H1 (cell line): ENCODE measurements at regions of chr5 and their contacts with region 1.

Region 1: GRCh38 chr5:78008356-78008967 is 232.3 kb upstream of the TBCA start:
- DNase-seq: no peak
- H3K4me3 ChIP-seq: no peak overlapping the region
- H3K27ac ChIP-seq: no peak overlapping the region
- H3K4me1 ChIP-seq: peaks cover 0 to 3% (median 0%) of the 10 kb centered on the region in 4 experiments; a peak in 1 of 7 replicates
- H3K27me3 ChIP-seq: peaks cover 0 to 1% (median under 1%) of the 10 kb centered on the region in 4 experiments; a peak in 2 of 7 replicates
- CTCF ChIP-seq: peak in 2 of 3 experiments; percentile 73 to 77; a peak in 3 of 4 replicates
- EP300 ChIP-seq: no peak
- POLR2A ChIP-seq: no peak
- RAD21 ChIP-seq: peak; percentile 86 to 91

Region 2: DNA sequence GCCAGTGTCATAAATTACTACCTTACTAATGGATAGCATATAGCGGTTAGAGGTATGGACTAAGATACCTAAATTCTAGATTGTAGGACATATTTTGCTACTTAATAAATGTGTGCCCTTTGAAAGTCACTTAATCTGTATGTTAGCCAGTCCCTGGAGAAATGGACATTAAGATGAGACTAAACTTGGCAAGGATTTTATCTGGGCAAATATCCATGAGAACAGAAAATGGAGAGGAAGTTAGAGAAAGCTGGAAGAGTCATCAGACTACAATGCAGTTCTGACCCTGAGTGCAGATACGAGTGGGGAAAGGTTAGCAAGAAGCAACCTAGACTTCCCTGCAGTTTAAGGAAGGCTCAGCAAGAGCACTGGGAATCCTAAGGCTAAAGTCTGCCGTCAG is 265.3 kb before region 1 on chr5:
- CTCF ChIA-PET with region 1: no interaction called
- POLR2A ChIA-PET with region 1: no interaction called
- DNase-seq: no peak
- H3K4me3 ChIP-seq: no peak overlapping the region
- H3K27ac ChIP-seq: no peak overlapping the region
- H3K4me1 ChIP-seq: peaks cover 0 to 4% (median 0%) of the 10 kb centered on the region in 4 experiments; a peak in 1 of 7 replicates
- H3K27me3 ChIP-seq: no peaks in the 10 kb centered on the region
- CTCF ChIP-seq: no peak
- EP300 ChIP-seq: no peak
- POLR2A ChIP-seq: no peak
- RAD21 ChIP-seq: no peak

Region 3: GRCh38 chr5:77859306-77859705 is 149.2 kb before region 1 on chr5:
- CTCF ChIA-PET with region 1: no interaction called
- POLR2A ChIA-PET with region 1: no interaction called
- DNase-seq: no peak
- H3K4me3 ChIP-seq: no peak overlapping the region
- H3K27ac ChIP-seq: no peak overlapping the region
- H3K4me1 ChIP-seq: no peaks in the 10 kb centered on the region
- H3K27me3 ChIP-seq: peaks cover 2 to 22% (median 14%) of the 10 kb centered on the region in 4 experiments; a peak in 6 of 7 replicates
- CTCF ChIP-seq: no peak
- EP300 ChIP-seq: no peak
- POLR2A ChIP-seq: no peak
- RAD21 ChIP-seq: no peak

Region 4: GRCh38 chr5:77876862-77877502 is 131.5 kb before region 1 on chr5:
- CTCF ChIA-PET with region 1: interaction called, 11 read pairs
- POLR2A ChIA-PET with region 1: no interaction called
- DNase-seq: no peak
- H3K4me3 ChIP-seq: no peak overlapping the region
- H3K27ac ChIP-seq: no peak overlapping the region
- H3K4me1 ChIP-seq: no peaks in the 10 kb centered on the region; a peak in 1 of 7 replicates
- H3K27me3 ChIP-seq: no peaks in the 10 kb centered on the region
- CTCF ChIP-seq: no peak
- EP300 ChIP-seq: no peak
- POLR2A ChIP-seq: no peak
- RAD21 ChIP-seq: no peak